Prostate gland (tissue), 2 donors: ENCODE measurements at regions of chr13 and their contacts with region 1.

Region 1: DNA sequence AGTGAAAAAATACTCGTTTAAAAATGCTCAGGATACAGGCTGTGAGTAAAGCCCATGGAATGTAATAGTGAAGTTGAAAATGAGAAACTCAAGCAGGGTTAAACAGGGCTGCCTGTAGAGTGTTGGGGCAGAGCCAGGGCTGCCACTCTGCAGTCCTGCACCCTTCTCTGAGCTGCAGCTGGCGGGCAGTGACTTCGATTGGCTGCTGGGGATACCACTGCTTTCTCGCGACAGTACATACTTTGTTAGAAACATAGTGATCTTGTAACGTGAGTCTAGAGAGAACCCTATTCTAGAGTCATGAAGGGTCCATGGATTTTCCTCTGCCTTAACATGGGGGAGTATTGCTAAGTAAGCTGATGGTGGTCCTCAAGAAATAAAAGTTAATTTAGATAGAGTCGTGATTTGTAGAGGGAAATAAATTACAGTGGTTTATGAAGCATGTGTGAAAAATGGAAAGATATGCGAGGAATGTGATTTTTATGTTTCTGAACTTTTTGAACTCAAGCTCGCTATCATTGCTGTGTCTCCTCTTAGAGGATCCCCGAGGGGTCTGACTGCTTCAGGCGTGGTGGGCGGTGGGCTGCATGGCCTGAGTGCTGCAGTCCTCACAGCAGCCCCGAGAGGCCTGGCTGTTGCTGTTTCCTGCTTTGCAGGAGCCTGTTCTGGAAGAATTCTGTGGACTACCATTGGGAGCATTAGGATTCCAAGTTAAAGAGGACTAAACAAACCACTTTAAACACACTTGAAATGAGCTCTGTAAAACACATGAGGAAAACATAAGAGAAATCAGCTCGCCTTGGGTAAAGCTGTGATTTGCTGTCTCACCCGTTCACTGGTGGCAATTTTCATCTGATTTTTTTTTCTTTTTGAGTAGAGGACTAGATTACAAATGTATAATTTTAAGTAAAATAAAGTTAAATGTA is 95.7 kb downstream of the ARHGEF7 start:
- DNase-seq: no peak
- H3K4me3 ChIP-seq: no peak overlapping the region
- H3K27ac ChIP-seq: no peak overlapping the region
- H3K4me1 ChIP-seq: peaks cover 3% of the 10 kb centered on the region
- H3K27me3 ChIP-seq: no peaks in the 10 kb centered on the region
- CTCF ChIP-seq: no peak
- POLR2A ChIP-seq: no peak

Region 2: GRCh38 chr13:111139874-111140561 is 70.8 kb before region 1 on chr13:
- intact Hi-C with region 1: no loop called
- DNase-seq: no peak
- H3K4me3 ChIP-seq: no peak overlapping the region
- H3K27ac ChIP-seq: no peak overlapping the region
- H3K4me1 ChIP-seq: no peaks in the 10 kb centered on the region
- H3K27me3 ChIP-seq: no peaks in the 10 kb centered on the region
- CTCF ChIP-seq: no peak
- POLR2A ChIP-seq: no peak

Region 3: DNA sequence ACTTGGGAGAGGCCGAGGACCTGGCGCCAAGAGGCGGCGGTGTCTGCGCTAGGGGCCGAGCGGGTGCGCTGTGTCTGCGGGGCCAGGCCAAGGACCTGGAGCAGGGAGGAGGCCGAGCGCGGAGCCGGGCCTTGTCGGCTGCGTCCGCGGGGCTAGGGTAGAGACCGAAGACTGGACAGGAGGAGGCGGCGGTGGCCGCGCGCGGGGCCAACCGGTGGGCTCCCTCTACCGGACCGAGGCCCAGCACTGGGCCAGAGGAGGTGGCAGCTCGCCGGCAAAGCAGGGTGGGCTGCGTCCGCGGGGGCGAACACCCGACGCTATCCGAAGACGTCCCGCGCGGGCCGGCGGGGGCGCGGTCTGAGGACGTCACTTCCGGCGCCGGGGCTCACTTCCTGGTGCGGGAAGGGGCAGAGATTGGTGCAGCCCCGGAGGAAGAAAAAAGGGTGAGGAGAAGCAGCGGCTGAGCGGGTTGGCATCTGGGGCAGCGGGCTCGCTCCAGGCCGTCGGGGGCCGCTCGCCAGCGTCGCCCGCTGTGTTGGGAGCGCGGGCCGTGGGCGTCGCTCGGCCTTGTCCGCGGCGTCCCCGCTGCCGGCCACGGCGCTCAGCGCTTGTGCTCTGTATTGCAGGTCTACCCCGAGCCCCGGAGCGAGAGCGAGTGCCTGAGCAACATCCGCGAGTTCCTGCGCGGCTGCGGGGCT is 57.4 kb before region 1 on chr13:
- intact Hi-C with region 1: loop called (anchors 5 kb)
- DNase-seq: peak; percentile 89
- H3K4me3 ChIP-seq: peak overlapping the region; percentile 73 to 99
- H3K27ac ChIP-seq: peak overlapping the region; percentile 92 to 96
- H3K4me1 ChIP-seq: peaks cover 6% of the 10 kb centered on the region
- H3K27me3 ChIP-seq: no peaks in the 10 kb centered on the region
- CTCF ChIP-seq: peak in 2 of 4 experiments; percentile 11 to 26
- POLR2A ChIP-seq: no peak

Region 4: DNA sequence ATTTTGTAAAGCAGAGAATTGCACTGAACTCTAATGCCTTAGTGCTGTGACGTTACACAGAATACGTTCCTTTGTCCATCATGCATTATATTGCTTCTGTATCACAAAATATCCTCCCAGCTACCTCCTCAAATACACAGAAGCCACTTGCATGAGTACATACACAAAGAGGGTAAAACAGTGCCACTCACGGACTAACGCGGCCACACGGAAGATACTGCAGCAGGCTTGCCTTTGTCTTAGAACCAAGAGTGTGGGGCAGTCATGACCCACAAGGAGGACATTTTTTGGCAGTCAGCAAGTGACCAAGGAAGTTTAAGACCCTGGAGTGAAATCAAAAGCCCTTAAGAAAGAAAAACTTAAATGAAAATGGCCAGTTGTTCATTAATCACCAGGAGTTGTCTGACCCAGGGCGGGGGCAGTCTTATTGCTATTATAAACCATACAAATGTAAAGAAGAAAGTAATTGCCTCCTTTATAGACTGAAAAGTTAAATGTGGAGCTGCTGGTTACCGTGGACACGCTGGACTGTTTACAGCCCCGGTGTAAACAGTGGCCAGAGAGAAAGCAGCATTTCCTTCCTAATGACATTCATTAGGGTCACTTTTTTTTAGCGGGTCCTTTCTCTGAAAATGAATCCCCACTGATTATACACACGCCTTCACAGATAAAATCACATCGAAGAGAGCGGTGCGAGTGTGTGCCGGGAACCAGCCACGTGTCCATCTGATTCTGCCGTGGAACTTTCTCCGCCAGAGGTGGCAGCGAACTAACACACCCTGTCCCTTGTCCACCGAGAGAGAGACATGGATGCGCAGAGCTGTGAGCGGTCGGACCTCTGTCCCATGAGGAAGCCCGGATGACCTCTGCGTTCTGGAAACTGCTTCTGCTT is 922.9 kb after region 1 on chr13:
- intact Hi-C with region 1: no loop called
- DNase-seq: no peak
- H3K4me3 ChIP-seq: no peak overlapping the region
- H3K27ac ChIP-seq: no peak overlapping the region
- H3K4me1 ChIP-seq: no peaks in the 10 kb centered on the region
- H3K27me3 ChIP-seq: peaks cover 4% of the 10 kb centered on the region
- CTCF ChIP-seq: no peak
- POLR2A ChIP-seq: no peak